ENCODE measurements at regions of chrX and their contacts with region 1.

Region 1: DNA sequence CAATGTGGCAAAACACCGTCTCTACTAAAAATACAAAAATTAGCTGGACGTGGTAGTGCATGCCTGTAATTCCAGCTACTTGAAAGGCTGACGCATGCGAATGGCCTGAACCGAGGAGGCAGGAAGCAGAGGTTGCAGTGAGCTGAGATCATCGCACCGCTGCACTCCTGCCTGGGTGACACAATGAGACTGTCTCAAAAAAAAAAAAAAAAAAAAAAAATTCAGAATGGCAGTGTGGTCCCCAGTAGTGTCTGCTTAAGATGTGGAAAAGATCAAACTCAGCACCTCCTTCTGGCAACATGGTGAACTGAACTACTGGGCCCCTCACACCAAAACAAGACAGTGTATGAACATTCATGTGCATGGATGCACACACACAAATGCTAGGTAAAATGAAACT is 32.2 kb downstream of the SMS start:
- DNase-seq: peak; percentile 66
- ATAC-seq: peak; percentile 89
- H3K4me3 Mint-ChIP-seq: peak overlapping the region; percentile 36
- H3K27ac Mint-ChIP-seq: peak overlapping the region; percentile 95
- H3K4me1 Mint-ChIP-seq: peaks cover 35% of the 10 kb centered on the region
- H3K27me3 Mint-ChIP-seq: no peaks in the 10 kb centered on the region

Region 2: DNA sequence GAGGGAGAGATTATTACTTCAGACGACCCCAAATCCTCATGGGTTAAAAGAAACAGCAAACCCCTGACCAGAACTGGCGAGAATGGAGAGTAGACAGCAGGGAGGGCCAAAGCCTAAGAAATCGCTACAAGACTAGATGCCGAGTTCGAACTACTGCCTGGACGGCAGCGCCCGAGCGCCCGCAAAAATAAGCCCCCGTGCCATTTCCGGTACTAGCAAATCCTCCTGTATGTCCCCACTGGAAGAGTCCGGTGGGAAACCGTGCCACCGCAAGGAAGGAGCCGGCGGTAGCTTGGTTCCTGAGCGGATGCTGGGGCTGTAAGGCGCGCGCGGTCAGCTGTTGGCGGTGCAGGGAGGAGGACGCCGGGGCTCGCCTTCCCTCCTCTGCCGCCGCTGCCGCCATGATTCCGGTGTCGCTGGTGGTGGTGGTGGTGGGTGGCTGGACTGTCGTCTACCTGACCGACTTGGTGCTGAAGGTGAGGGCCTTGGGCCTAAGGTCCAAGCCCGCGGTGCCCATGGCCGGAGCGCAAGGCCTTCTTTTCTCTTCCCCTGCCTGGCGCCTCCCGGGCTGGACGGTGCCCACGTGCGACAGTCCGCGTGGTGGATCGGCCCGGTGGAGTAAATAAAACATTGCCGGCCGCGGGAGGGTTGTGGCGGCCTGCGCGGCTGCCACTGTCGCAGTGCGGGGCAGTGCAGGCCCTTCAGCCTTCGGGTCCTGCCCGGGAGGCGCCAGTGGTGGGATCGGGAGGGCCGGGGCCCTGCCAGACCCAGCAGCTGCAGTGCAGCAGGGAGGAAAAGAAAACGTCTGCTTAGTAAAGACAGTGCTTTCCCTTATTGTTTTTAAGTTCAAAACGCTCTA is 133.2 kb before region 1 on chrX and contains the start of gene MBTPS2:
- CTCF ChIA-PET with region 1: interaction called, 19 read pairs
- POLR2A ChIA-PET with region 1: interaction called, 5 read pairs
- DNase-seq: peak; percentile 87
- ATAC-seq: peak; percentile 96
- H3K4me3 Mint-ChIP-seq: peak within 1 kb of the TSS; percentile 88
- H3K27ac Mint-ChIP-seq: peak within 1 kb of the TSS; percentile 89
- H3K4me1 Mint-ChIP-seq: peaks cover 8% of the 10 kb centered on the region
- H3K27me3 Mint-ChIP-seq: no peaks in the 10 kb centered on the region
- total RNA-seq, gene MBTPS2: 8.1 to 8.5 TPM

Measured in activated CD8-positive, alpha-beta T cell treated with anti-CD3 and anti-CD28 coated beads, Interleukin-2, amount 10 ng/mL, durations not matched to agents 7 days and 5 days (primary cell).